WTC11 (cell line): ENCODE measurements at regions of chr5 and their contacts with region 1.

Region 1: DNA sequence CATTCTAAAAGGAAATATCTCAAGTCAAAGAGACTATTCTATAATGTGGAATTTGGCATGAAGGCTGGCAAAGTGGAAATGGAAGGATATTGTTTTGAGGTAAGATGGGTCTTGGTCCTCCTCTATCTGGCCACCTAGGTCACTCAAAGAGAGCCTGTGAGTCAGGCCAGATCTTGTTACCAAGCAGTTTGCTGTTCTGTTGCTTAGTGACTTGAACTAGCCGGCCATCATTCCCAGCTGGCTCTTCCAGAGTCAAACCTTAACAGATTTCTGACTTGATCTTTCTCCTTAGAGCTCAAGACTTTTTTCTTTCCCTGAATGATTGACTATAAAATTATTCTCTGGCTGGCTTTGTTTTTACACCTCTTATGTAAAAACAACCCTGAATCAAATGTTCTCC is 136.1 kb downstream of the PDE4D start:
- DNase-seq: no peak
- ATAC-seq: no peak
- H3K4me3 Mint-ChIP-seq: no peak overlapping the region
- H3K27ac Mint-ChIP-seq: no peak overlapping the region
- H3K4me1 Mint-ChIP-seq: peaks cover 16% of the 10 kb centered on the region
- H3K27me3 Mint-ChIP-seq: no peaks in the 10 kb centered on the region
- CTCF ChIP-seq: no peak

Region 2: DNA sequence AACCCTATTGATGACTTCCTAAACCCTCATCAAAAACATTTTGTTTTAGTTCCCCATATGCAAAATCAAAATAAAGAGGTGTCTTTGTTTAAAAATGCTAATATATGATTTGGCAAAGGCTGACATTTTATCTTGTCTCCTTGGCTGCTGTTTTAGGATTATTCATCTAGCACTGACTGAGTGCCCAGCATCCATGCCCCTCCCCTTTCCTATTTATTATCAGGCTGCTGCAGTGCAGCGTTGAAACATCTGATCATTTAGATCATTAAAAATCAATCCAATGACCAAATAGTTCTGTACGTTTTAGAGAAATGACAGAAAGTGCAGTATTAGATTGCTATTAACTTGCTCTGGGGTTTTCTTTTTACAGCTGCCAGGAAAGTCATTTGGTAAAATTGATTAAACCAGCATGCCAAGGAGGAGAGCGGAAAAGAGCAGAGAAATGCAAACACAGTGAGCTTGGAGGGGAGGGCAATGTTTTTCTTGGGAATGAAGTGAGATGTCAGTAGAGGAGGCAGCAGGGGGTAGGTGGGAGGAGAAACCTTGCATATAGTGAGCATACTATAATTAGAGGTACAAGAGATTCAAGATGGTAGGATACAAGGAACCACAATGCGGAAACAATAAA is 150.2 kb before region 1 on chr5:
- CTCF ChIA-PET with region 1: no interaction called
- POLR2A ChIA-PET with region 1: interaction called, 10 read pairs
- DNase-seq: no peak
- ATAC-seq: peak; percentile 64
- H3K4me3 Mint-ChIP-seq: no peak overlapping the region
- H3K27ac Mint-ChIP-seq: no peak overlapping the region
- H3K4me1 Mint-ChIP-seq: peaks cover 38% of the 10 kb centered on the region
- H3K27me3 Mint-ChIP-seq: no peaks in the 10 kb centered on the region
- CTCF ChIP-seq: no peak

Region 3: GRCh38 chr5:59621477-59621876 is 136.0 kb before region 1 on chr5:
- CTCF ChIA-PET with region 1: no interaction called
- POLR2A ChIA-PET with region 1: no interaction called
- DNase-seq: no peak
- ATAC-seq: no peak
- H3K4me3 Mint-ChIP-seq: no peak overlapping the region
- H3K27ac Mint-ChIP-seq: no peak overlapping the region
- H3K4me1 Mint-ChIP-seq: peaks cover 19% of the 10 kb centered on the region
- H3K27me3 Mint-ChIP-seq: no peaks in the 10 kb centered on the region
- CTCF ChIP-seq: no peak